ENCODE measurements at regions of chr16 and their contacts with region 1.

Region 1: GRCh38 chr16:18969050-18969854 is 14.5 kb upstream of the TMC7 start:
- DNase-seq: peak; percentile 94
- H3K4me3 Mint-ChIP-seq: peak overlapping the region; percentile 53
- H3K27ac Mint-ChIP-seq: no peak overlapping the region
- H3K4me1 Mint-ChIP-seq: peaks cover 7% of the 10 kb centered on the region
- H3K27me3 Mint-ChIP-seq: peaks cover 2% of the 10 kb centered on the region

Region 2: DNA sequence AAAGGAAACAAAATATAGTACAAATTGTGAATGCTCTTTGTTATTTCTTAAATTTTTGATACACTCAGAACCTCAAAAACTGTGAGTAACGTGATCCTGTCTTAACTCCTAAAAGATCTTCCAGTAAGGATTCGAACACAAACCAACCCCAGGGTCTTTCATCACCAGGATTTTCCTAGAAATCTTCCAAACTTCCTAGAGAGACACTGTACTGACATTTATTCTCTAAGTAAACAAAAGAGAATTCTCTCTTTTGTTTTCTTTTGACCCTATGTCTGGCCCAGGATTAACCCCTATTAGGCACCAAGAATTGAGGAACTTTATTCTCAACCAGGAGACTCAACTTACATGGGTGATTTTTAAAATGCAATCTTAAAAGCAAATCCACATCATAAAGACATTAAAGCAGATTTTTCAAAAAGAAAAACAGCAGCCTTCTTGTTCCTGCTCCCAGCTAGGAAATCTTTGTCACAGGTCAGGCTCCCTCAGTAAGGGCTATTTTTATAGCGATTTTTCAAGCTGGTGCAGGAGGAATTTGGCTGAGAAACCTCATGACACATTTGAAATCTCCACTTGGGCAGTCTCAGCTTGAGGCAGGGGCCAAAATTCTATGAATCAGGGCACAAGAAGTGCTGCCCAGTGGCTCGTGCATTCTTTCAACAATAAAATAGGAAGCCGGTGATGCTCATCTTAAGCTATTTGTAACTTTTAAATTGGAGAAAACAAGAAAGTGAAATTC is 36.8 kb before region 1 on chr16:
- intact Hi-C with region 1: loop called (anchors 5 kb)
- DNase-seq: no peak
- H3K4me3 Mint-ChIP-seq: no peak overlapping the region
- H3K27ac Mint-ChIP-seq: no peak overlapping the region
- H3K4me1 Mint-ChIP-seq: peaks cover 10% of the 10 kb centered on the region
- H3K27me3 Mint-ChIP-seq: no peaks in the 10 kb centered on the region

Region 3: DNA sequence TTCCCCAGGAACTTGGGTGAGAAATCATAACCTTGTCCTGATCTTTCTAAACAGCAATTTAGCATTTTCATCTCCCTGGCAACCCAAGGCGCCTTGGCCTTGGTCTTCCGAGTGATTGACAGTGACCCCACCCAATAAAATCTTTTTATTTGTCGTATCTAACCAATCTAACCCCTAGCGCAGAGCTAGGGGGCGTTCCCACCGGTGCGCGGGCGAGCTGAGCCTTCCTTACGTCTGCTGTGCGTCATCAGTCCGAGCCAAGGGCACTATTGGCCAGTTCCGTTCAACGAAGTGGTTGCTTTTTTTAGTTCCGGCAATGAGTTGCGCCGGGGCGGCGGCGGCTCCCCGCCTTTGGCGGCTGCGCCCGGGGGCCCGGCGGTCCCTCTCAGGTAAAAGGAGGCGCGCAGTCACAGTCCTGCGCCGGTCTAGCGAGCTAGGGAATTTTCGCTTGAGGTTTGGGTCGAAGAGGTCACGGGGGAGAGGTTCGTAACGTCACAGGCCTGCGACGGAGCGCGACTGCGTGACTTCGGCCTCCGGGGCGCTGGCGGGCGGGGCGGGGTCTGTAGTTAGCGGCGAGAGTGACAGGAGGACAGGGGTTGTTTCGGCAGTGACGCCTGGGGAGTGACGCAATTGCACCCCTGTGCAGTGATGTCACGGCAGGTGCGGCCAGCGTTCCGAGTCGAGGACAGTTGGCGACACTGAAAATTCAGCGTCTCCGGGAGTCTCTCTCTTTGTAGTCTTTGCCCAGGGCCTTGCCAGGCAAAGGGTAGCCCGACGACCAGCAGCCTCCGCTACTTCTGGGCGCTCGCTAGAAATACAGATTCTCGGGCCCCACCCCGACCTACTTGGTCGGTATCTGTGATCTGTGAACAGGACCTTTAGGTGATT is 98.3 kb after region 1 on chr16 and contains the start of gene COQ7:
- intact Hi-C with region 1: loop called (anchors 10 kb)
- DNase-seq: peak; percentile 99
- H3K4me3 Mint-ChIP-seq: peak within 1 kb of the TSS; percentile 92
- H3K27ac Mint-ChIP-seq: peak within 1 kb of the TSS; percentile 97
- H3K4me1 Mint-ChIP-seq: peaks cover 16% of the 10 kb centered on the region
- H3K27me3 Mint-ChIP-seq: peaks cover 3% of the 10 kb centered on the region
- total RNA-seq, gene COQ7: 21.6 and 22.0 TPM in 2 replicates

Measured in activated CD4-positive, alpha-beta T cell treated with anti-CD3 and anti-CD28 coated beads, Interleukin-2, amount 10 ng/mL, durations not matched to agents 24 days and 14 days (primary cell).